H1 (cell line): ENCODE measurements at regions of chr11 and their contacts with region 1.

Region 1: GRCh38 chr11:67353317-67354074 is at the start of gene POLD4:
- DNase-seq: peak; percentile 79 to 99
- H3K4me3 ChIP-seq: peak within 1 kb of the TSS; percentile 57 to 78 (median 73)
- H3K27ac ChIP-seq: peak within 1 kb of the TSS; percentile 72; the same call in 1 of the 2 replicates
- H3K4me1 ChIP-seq: peaks cover 0 to 18% (median 15%) of the 10 kb centered on the region in 4 experiments; a peak in 6 of 7 replicates
- H3K27me3 ChIP-seq: no peaks in the 10 kb centered on the region; a peak in 1 of 7 replicates
- CTCF ChIP-seq: no peak
- EP300 ChIP-seq: no peak
- POLR2A ChIP-seq: peak in 1 of 2 experiments; percentile 64; a peak in 2 of 3 replicates
- RAD21 ChIP-seq: no peak
- total RNA-seq, gene POLD4: 18.5 and 21.2 TPM in 2 replicates

Region 2: DNA sequence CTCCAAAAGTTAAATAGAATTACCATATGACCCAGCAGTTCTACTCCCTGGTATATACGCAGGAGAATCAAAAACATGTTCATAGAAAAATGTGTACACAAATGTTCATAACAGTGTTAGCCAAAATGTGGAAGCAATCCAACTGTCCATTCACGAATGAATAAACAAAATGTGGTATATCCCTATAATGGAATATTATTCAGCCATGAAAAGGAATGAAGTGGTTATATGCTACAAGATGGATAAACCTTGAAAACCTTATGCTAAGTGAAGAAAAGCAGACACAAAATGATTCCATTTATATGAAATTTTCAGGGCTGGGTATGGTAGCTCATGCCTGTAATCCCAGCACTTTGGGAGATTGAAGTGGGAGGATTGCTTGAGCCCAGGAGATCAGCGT is 16.2 kb before region 1 on chr11:
- CTCF ChIA-PET with region 1: interaction called, 56 read pairs
- POLR2A ChIA-PET with region 1: no interaction called
- DNase-seq: no peak
- H3K4me3 ChIP-seq: no peak overlapping the region
- H3K27ac ChIP-seq: no peak overlapping the region
- H3K4me1 ChIP-seq: no peaks in the 10 kb centered on the region
- H3K27me3 ChIP-seq: no peaks in the 10 kb centered on the region
- CTCF ChIP-seq: no peak
- EP300 ChIP-seq: no peak
- POLR2A ChIP-seq: no peak
- RAD21 ChIP-seq: no peak

Region 3: DNA sequence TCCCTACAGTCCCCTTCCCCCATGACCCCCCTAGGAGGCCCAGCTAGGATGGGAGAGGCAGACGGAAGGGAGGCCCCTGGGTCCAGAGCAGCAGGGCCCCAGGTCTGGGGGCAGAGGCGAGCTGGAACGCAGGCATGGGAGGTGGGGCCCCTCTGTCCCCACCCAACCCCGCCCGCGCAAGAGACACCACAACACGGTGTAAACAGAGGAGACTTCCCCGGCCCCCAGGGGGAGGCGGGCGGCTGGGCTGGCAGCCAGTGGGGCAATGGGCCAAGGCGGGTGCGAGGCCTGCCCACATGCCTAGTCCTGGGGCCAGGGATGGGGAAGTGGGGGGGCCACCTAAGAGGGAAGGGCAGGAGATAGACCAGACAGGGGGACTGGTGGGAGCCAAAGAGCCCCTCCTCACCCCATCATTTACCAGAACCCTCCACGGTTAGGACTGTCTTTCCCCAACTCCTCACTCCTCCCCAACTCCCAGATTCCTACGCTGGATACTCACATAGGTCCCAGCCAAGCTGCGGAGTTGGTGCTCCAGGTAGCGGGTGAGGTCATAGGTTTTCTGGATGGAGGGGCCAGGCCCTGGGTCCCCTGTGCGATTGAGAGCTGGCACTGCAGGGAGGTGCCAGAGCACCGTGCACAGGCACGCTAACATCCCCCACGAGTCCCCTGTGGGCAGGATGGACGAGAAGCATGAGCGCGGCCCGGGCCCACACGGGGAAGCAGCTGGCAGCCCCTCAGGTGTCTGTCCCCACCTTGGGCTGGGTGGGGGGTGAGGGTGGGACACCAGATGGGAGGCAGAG is 13.7 kb after region 1 on chr11:
- CTCF ChIA-PET with region 1: interaction called, 1,305 read pairs
- POLR2A ChIA-PET with region 1: interaction called, 16 read pairs
- DNase-seq: no peak
- H3K4me3 ChIP-seq: no peak overlapping the region
- H3K27ac ChIP-seq: no peak overlapping the region
- H3K4me1 ChIP-seq: peaks cover 0 to 26% (median 20%) of the 10 kb centered on the region in 4 experiments; a peak in 6 of 7 replicates
- H3K27me3 ChIP-seq: peaks cover 0 to 31% (median 25%) of the 10 kb centered on the region in 4 experiments; a peak in 6 of 7 replicates
- CTCF ChIP-seq: no peak
- EP300 ChIP-seq: no peak
- POLR2A ChIP-seq: no peak
- RAD21 ChIP-seq: no peak

Region 4: GRCh38 chr11:67373925-67374618 is 20.6 kb after region 1 on chr11:
- CTCF ChIA-PET with region 1: interaction called, 1,305 read pairs
- POLR2A ChIA-PET with region 1: interaction called, 11 read pairs
- DNase-seq: peak; percentile 78 to 79
- H3K4me3 ChIP-seq: peak overlapping the region; percentile 41 to 77 (median 51)
- H3K27ac ChIP-seq: no peak overlapping the region
- H3K4me1 ChIP-seq: peaks cover 0 to 45% (median 38%) of the 10 kb centered on the region in 4 experiments; a peak in 6 of 7 replicates
- H3K27me3 ChIP-seq: peaks cover 7 to 68% (median 57%) of the 10 kb centered on the region in 4 experiments
- CTCF ChIP-seq: peak in 2 of 3 experiments; percentile 29 to 34; a peak in 3 of 4 replicates
- EP300 ChIP-seq: no peak
- POLR2A ChIP-seq: no peak
- RAD21 ChIP-seq: peak in 1 of 2 experiments; percentile 3; a peak in 1 of 4 replicates

Region 5: DNA sequence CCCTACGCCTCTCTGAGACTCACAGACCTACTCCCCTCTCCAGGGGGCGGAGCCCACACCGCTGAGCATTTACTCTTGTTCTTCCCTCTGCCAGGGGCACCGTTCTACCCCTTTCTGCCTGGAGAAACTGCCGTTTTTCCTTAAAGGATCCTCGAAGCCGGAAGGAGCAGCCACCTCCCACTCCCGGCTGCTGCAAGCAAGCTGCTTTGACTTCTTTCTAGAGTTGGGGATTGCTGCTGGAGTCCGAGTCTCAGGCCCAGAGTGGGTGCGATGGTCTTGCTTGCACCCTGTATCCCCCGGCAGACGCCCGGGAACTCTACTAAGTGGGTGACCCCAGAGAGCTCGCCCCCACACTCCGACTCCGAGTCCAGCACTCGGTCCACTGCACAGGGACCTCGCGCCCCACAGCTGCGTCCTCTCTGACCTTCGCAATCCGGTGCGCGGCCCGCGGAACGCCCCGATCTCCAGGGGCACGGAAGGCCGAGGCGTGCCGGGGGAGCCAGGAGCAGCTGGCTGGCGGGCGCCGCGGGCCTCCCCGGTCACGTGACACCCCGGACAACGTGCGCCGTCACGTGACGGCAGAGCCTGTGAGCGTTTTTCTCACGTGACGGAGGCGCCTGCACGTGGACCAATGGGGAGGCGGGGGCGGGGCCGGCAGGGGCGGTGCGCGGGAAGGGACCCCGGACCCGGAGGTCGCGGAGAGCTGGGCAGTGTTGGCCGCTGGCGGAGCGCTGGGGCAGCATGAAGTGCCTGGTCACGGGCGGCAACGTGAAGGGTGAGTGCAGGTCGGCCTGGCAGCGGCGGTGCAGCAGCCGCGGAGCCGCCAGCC is 38.0 kb after region 1 on chr11 and contains the start of gene RAD9A:
- CTCF ChIA-PET with region 1: interaction called, 1,305 read pairs
- POLR2A ChIA-PET with region 1: interaction called, 8 read pairs
- DNase-seq: peak; percentile 67 to 91
- H3K4me3 ChIP-seq: peak within 1 kb of the TSS; percentile 63 to 88 (median 69)
- H3K27ac ChIP-seq: peak within 1 kb of the TSS; percentile 35; the same call in 1 of the 2 replicates
- H3K4me1 ChIP-seq: peaks cover 0 to 12% (median 7%) of the 10 kb centered on the region in 4 experiments; a peak in 4 of 7 replicates
- H3K27me3 ChIP-seq: no peaks in the 10 kb centered on the region; a peak in 2 of 7 replicates
- CTCF ChIP-seq: no peak
- EP300 ChIP-seq: peak in 1 of 2 experiments; percentile 78; a peak in 2 of 3 replicates
- POLR2A ChIP-seq: peak in 1 of 2 experiments; percentile 56; a peak in 2 of 3 replicates
- RAD21 ChIP-seq: peak in 1 of 2 experiments; percentile 1; a peak in 1 of 4 replicates
- total RNA-seq, gene RAD9A: 20.8 and 22.2 TPM in 2 replicates